Activated CD4-positive, alpha-beta T cell treated with anti-CD3 and anti-CD28 coated beads for 36 hours (primary cell): ENCODE measurements at regions of chr12 and their contacts with region 1.

Region 1: DNA sequence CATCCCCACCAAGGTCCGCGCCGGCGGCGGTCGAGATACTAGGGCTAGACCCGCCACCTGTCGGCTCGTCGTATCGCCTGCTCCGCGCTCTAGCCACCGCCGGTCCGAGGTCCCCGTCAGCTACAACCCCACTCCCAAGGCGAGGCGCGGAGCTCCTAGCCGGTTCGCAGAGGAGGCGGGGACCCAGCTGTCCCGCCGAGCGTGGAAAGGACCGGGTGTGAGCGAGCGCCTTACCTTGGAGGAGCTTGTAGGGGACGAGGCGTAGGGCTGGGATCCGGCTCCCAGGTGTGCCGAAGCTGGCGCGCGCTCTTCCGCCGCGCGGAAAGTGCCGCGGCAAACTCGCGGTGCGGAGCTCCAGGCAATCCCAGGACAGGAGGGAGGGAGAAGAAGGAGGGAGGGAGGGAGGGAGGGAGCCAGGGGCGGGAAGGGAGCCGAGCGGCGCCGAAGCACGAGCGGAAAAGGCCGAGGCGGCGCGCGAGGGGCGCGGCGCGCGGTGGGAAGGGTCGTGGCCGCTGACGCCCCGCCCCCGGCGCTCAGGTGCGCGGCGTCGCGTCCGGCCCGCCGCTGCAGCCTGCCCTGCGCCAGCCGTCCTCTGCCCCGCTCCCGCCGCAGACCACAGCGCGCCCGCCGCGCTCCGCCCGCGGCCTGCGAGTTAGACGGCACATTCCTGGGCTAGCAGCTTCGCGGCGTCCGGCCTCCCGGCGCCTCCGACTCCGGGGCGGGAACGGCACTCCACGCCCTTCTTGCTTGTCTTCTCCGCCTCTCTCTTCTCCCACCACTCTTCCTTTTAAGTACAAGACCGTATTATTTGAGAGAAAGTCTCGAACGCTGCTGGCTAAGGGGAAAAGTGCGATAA is at the start of gene PAWR:
- DNase-seq: peak; percentile 58
- ATAC-seq: peak; percentile 67
- H3K4me3 Mint-ChIP-seq: peak within 1 kb of the TSS; percentile 72
- H3K27ac Mint-ChIP-seq: no peak within 1 kb of the TSS
- H3K4me1 Mint-ChIP-seq: peaks cover 8% of the 10 kb centered on the region
- H3K27me3 Mint-ChIP-seq: peaks cover 39% of the 10 kb centered on the region
- total RNA-seq, gene PAWR: 7.0 to 10.1 TPM

Region 2: GRCh38 chr12:79935021-79935623 is 244.3 kb after region 1 on chr12 and contains the start of gene PPP1R12A:
- CTCF ChIA-PET with region 1: no interaction called
- POLR2A ChIA-PET with region 1: no interaction called
- intact Hi-C with region 1: loop called in 1 of 2 experiments (anchors 5 kb)
- DNase-seq: peak; percentile 97
- ATAC-seq: peak; percentile 87
- H3K4me3 Mint-ChIP-seq: peak within 1 kb of the TSS; percentile 95
- H3K27ac Mint-ChIP-seq: peak within 1 kb of the TSS; percentile 96
- H3K4me1 Mint-ChIP-seq: peaks cover 32% of the 10 kb centered on the region
- H3K27me3 Mint-ChIP-seq: no peaks in the 10 kb centered on the region
- total RNA-seq, gene PPP1R12A: 72.2 to 134 TPM